Left cardiac atrium (tissue), 4 donors: ENCODE measurements at regions of chr13 and their contacts with region 1.

Region 1: GRCh38 chr13:47420568-47420967 is 523.7 kb upstream of the HTR2A start:
- DNase-seq: no peak
- ATAC-seq: peak in 1 of 2 donors; percentile 67

Region 2: GRCh38 chr13:47555235-47555634 is 134.7 kb after region 1 on chr13:
- intact Hi-C with region 1: no loop called
- DNase-seq: no peak
- ATAC-seq: no peak

Region 3: DNA sequence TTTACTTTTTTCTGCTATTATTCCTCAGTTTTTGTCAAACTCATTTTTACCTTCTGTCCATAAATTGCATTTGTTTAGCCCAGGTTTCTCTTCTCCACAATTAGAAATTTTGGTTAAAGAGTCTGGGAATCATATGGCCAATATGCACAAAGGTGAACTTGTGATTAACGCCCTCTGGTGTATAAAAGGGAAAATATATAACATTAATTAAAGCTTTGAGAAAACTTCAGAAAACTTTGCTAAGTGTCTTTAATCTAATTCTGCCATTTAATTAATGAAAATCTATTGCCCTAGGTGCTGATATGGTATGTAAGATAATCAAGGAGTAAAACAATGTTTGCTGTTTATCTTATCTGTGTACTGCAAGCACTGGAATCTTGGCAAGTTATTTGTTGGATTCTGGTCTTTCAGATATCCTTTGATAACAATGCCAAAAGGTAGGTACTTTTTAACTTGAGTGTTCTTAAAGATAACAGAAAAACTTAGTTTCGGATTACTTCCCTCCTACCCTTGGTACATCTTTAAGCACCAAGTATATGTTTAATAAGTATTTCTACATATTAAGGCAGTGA is 177.9 kb after region 1 on chr13:
- intact Hi-C with region 1: loop called in 1 of 2 experiments (anchors 2 kb)
- DNase-seq: no peak
- ATAC-seq: no peak

Region 4: DNA sequence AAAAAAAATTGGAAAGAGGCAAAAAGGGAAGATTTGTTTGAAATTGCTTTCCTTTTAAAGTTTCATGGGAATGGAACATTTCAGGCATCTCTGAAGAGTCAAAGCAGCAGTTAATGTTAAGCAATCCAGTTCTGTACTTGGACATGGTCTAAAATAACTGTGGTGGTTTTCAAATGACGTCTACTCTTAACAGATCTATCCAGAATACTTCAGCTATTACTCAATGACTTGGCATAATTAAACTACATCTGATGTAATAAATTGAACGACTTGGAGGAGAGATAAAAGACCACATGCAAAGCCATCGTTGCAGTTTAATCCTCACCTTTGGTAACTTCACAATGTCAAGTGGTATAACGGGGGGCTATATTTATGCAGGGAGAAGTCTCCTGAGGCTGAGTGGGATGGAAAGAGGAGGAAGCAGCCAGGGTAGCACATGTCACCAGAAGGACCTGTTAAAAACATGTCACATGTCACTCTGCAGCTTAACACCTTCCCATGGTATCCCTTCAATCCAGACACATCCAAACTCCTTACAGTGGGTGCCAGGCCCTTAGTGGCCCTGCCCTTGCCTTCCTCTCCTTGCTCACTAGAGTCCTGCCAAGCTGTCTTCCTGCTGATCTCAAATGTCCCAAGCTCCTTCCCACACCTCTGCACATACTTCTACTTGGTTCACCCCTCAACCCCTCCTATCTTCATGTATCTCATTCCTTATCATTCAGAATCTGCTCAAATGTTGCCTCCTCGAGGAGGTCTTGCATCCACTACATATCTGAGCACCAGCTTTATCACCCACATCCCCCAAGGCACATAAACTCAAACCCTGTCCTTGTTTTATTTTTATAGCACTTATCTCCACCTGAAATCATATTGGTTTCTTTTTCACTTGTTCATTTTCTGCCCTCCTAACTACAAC is 252.7 kb after region 1 on chr13:
- intact Hi-C with region 1: loop called in 1 of 2 experiments (anchors 5 kb)
- DNase-seq: peak; percentile 26
- ATAC-seq: peak; percentile 93 to 97

Region 5: DNA sequence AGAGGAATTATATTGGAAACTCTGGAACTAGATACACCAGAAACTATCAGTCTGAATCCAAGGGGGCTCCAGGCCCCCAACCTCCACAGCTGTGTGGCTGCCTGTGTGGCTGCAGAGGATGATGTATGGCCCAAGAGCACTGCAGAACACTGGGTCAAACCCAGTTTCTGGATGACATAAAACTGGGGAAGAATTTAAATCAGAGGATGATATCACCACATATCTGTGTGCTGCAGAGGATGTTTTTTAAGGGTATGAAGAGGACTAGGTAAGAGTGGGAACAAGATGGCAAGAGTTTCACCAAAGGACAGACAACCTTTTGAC is 354.1 kb after region 1 on chr13:
- intact Hi-C with region 1: loop called (anchors 1 to 5 kb)
- DNase-seq: no peak
- ATAC-seq: no peak